Activated CD4-positive, alpha-beta T cell treated with anti-CD3 and anti-CD28 coated beads for 36 hours (primary cell): ENCODE measurements at regions of chr1 and their contacts with region 1.

Region 1: GRCh38 chr1:161225534-161226319 is at the start of gene TOMM40L:
- DNase-seq: peak; percentile 91
- ATAC-seq: peak; percentile 95
- H3K4me3 Mint-ChIP-seq: peak within 1 kb of the TSS; percentile 97
- H3K27ac Mint-ChIP-seq: peak within 1 kb of the TSS; percentile 98
- H3K4me1 Mint-ChIP-seq: peaks cover 33% of the 10 kb centered on the region
- H3K27me3 Mint-ChIP-seq: no peaks in the 10 kb centered on the region
- total RNA-seq, gene TOMM40L: 12.3 to 13.2 TPM

Region 2: GRCh38 chr1:161159087-161159912 is 66.4 kb before region 1 on chr1 and contains the start of gene USP21:
- CTCF ChIA-PET with region 1: no interaction called
- POLR2A ChIA-PET with region 1: no interaction called
- intact Hi-C with region 1: loop called in 1 of 2 experiments (anchors 1 kb)
- DNase-seq: peak; percentile 95
- ATAC-seq: peak; percentile 96
- H3K4me3 Mint-ChIP-seq: peak within 1 kb of the TSS; percentile 79
- H3K27ac Mint-ChIP-seq: peak within 1 kb of the TSS; percentile 82
- H3K4me1 Mint-ChIP-seq: peaks cover 50% of the 10 kb centered on the region
- H3K27me3 Mint-ChIP-seq: no peaks in the 10 kb centered on the region
- total RNA-seq, gene USP21: 25.1 to 32.0 TPM

Region 3: GRCh38 chr1:161185282-161185682 is 40.4 kb before region 1 on chr1:
- CTCF ChIA-PET with region 1: interaction called, 12 read pairs
- POLR2A ChIA-PET with region 1: interaction called, 5 read pairs
- intact Hi-C with region 1: no loop called
- DNase-seq: peak; percentile 86
- ATAC-seq: peak; percentile 71
- H3K4me3 Mint-ChIP-seq: peak overlapping the region; percentile 50
- H3K27ac Mint-ChIP-seq: peak overlapping the region; percentile 90
- H3K4me1 Mint-ChIP-seq: peaks cover 79% of the 10 kb centered on the region
- H3K27me3 Mint-ChIP-seq: no peaks in the 10 kb centered on the region

Region 4: GRCh38 chr1:161209790-161210409 is 15.8 kb before region 1 on chr1:
- CTCF ChIA-PET with region 1: interaction called, 89 read pairs
- POLR2A ChIA-PET with region 1: interaction called, 5 read pairs
- intact Hi-C with region 1: loop called in 1 of 2 experiments (anchors 1 kb)
- DNase-seq: peak; percentile 85
- ATAC-seq: peak; percentile 97
- H3K4me3 Mint-ChIP-seq: no peak overlapping the region
- H3K27ac Mint-ChIP-seq: peak overlapping the region; percentile 78
- H3K4me1 Mint-ChIP-seq: peaks cover 26% of the 10 kb centered on the region
- H3K27me3 Mint-ChIP-seq: no peaks in the 10 kb centered on the region

Region 5: DNA sequence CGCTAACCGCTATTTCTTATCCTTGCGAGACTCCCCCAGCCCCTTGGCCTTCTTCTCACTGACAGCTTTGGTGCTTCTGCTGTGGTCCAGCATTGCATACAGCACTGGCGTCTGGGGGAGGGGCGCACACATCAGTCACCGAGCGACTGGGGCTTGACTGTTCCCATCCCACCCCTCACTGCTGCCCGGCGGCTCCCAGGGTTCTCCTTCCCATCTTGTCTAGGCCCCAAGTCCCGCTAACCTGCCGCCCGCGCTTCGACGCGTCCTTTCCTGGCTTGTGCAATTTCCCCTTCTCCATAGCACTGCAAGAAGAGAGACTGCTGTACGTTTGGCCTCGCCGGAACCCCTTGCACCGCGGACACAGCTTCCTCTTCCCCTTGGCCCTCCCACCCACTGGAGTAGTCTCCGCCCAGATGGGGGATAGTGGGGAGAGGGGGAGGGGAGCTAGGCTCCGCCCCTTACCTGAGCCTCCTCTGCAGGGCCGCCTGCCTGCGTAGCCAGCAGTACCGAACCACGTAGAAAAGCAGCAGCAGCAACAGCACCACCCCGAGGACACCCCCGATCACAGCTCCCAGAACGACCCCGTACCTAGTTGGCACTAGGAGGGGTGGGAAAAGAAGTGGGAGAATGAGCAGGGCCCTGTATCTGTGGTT is 80.3 kb after region 1 on chr1:
- CTCF ChIA-PET with region 1: interaction called, 18 read pairs
- POLR2A ChIA-PET with region 1: interaction called, 4 read pairs
- intact Hi-C with region 1: loop called in 1 of 2 experiments (anchors 1 kb)
- DNase-seq: peak; percentile 91
- ATAC-seq: peak; percentile 98
- H3K4me3 Mint-ChIP-seq: peak overlapping the region; percentile 96
- H3K27ac Mint-ChIP-seq: peak overlapping the region; percentile 88
- H3K4me1 Mint-ChIP-seq: peaks cover 34% of the 10 kb centered on the region
- H3K27me3 Mint-ChIP-seq: no peaks in the 10 kb centered on the region

Region 6: DNA sequence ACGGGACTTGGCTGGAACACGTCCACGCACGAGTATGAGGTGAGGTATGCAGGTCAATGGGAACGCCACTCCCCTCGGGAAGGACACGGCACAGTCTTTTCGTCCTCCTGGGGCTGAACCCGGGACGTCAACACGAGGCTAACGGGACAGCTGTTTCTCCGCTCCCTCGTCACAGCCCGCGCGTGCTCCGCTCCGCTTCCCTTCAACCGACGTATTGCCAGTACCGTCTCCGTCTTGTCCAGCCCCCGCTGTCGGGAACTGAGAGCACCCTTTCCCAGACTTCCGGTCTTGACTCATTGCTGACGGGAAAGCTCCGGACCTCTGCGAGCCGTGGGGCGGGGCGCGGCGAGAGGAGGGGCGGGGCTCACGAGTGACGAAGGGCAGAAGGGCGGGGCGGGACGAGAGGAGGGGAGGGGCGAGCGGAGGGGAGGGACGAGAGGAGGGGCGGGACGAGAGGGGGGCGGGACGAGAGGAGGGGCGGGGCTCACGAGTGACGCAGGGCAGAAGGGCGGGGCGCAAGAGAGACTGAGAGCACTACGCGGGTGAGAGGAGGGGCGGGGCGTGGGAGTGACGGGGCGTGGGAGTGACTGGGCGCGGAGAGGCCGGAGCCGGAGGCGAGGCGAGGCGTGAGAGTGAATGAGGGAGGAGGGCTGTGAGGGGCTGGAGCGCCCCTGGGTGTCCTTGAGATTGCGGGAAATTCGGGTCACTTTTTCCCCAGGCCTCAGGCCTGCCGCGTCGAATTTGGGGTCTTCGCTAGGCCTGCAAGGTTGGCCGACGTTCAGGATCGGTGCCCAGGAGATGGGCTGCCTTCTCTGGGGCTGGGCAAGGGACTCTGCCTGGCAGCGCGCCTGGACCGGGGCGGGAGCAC is 164.2 kb after region 1 on chr1:
- CTCF ChIA-PET with region 1: interaction called, 108 read pairs
- POLR2A ChIA-PET with region 1: interaction called, 4 read pairs
- intact Hi-C with region 1: loop called (anchors 1 kb)
- DNase-seq: peak; percentile 97
- ATAC-seq: peak; percentile 83
- H3K4me3 Mint-ChIP-seq: peak overlapping the region; percentile 87
- H3K27ac Mint-ChIP-seq: peak overlapping the region; percentile 96
- H3K4me1 Mint-ChIP-seq: peaks cover 43% of the 10 kb centered on the region
- H3K27me3 Mint-ChIP-seq: no peaks in the 10 kb centered on the region